Esophagus squamous epithelium (tissue), 5 donors: ENCODE measurements at regions of chr9 and their contacts with region 1.

Region 1: DNA sequence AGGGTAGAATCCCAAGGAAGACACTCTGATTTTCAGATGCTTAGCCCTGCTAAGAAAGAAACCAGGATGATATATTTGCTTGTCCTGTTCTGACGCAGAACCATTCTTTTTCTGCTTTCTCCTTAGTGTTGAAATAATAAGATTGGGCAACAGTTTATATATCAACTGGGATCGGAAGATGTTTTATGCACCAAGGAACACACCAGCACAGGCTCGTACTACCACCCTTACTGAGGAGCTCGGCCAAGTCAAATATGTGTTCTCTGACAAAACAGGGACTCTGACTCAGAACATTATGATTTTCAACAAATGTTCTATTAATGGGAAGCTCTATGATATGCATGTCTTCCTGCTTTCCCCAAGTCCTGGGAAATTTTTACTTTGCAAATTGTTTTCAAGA is 19.0 kb upstream of the RUSC2 start:
- DNase-seq: no peak
- H3K4me3 ChIP-seq: no peak overlapping the region
- H3K27ac ChIP-seq: peak overlapping the region in 2 of 4 donors; percentile 47 to 70
- H3K4me1 ChIP-seq: peaks cover 0 to 11% (median 6%) of the 10 kb centered on the region in 3 donors
- H3K27me3 ChIP-seq: peaks cover 0 to 6% (median 0%) of the 10 kb centered on the region in 4 donors
- CTCF ChIP-seq: no peak
- POLR2A ChIP-seq: no peak

Region 2: DNA sequence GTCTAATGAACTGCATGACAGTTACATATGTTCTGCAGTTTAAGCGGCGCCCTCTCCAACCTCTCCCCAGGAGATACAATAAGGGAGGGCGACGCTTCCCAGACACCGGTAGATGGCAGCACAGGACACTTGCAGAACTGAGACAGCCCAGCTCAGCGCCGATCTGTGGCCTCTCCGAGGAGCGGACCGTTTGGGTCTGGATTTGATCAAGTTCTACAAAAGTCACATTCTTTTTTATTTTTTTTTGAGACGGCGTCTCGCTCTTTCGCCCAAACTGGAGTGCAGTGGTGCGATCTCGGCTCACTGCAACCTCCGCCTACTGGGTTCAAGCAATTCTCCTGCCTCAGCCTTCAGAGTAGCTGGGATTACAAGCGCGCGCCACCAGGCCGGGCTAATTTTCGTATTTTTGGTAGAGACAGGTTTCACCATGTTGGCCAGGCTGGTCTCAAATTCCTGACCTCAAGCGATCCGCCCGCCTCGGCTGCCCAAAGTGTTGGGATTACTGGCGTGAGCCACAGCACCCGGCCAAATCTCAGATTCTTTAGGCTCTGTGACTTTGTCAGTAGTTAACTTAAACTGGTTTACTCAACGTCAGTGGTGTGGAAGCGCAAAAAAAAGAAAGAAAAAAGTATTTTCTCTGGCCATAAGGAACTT is 353.9 kb before region 1 on chr9:
- intact Hi-C with region 1: loop called (anchors 10 kb)
- DNase-seq: peak; percentile 76
- H3K4me3 ChIP-seq: peak overlapping the region; percentile 8 to 80 (median 63)
- H3K27ac ChIP-seq: peak overlapping the region; percentile 87 to 97 (median 94)
- H3K4me1 ChIP-seq: peaks cover 31 to 48% (median 35%) of the 10 kb centered on the region in 3 donors
- H3K27me3 ChIP-seq: no peaks in the 10 kb centered on the region
- CTCF ChIP-seq: peak; percentile 90 to 97 (median 93)
- POLR2A ChIP-seq: no peak

Region 3: DNA sequence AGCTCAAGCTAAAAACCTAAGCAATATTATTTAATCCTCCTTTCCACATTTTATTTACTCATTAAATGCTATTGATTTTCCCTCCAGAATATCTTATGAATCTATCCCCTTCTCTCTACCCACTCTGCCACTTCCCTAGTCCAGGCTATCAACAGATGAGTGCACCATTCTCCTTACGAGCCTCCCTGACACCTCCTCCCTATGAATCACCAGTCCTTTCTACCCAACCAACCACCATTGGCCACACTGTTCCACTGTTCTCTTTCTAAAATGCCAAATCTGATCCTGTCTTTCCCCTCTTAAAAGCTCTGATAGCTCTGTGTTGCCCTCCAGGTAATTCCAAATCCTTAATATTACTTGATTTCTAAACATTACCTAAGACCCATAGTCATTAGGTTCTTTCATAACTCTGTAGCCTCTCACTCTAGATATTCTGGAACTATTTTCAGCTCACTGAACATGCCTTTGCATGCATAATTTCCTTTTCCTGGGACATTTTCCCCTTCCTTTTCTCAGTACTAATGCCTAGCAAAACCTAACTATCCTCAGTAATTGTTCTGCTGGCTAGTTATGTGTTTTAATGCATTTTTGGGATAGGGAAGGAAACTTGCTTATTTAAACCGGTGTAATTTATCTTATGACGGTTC is 182.8 kb before region 1 on chr9:
- intact Hi-C with region 1: no loop called
- DNase-seq: no peak
- H3K4me3 ChIP-seq: no peak overlapping the region
- H3K27ac ChIP-seq: peak overlapping the region in 1 of 4 donors; percentile 37
- H3K4me1 ChIP-seq: peaks cover 0 to 10% (median 6%) of the 10 kb centered on the region in 3 donors
- H3K27me3 ChIP-seq: no peaks in the 10 kb centered on the region
- CTCF ChIP-seq: no peak
- POLR2A ChIP-seq: no peak

Region 4: GRCh38 chr9:35395076-35395705 is 75.7 kb before region 1 on chr9:
- intact Hi-C with region 1: no loop called
- DNase-seq: no peak
- H3K4me3 ChIP-seq: no peak overlapping the region
- H3K27ac ChIP-seq: no peak overlapping the region
- H3K4me1 ChIP-seq: no peaks in the 10 kb centered on the region
- H3K27me3 ChIP-seq: no peaks in the 10 kb centered on the region
- CTCF ChIP-seq: no peak
- POLR2A ChIP-seq: no peak